HepG2 (cell line): ENCODE measurements at regions of chr2 and their contacts with region 1.

Region 1: GRCh38 chr2:96760036-96760985 is at the start of gene CNNM4:
- DNase-seq: peak; percentile 88
- ATAC-seq: peak; percentile 75
- H3K4me3 ChIP-seq: peak within 1 kb of the TSS; percentile 59 to 94 (median 77)
- H3K27ac ChIP-seq: peak within 1 kb of the TSS; percentile 39
- H3K4me1 ChIP-seq: peaks cover 65% of the 10 kb centered on the region
- H3K27me3 ChIP-seq: peaks cover 3 to 14% of the 10 kb centered on the region in 2 experiments; a peak in 3 of 5 replicates
- CTCF ChIP-seq: peak; percentile 57
- EP300 ChIP-seq: 0 out of 4 replicates have a peak, but pooled peaks of 1 of the 2 experiments have one; percentile 8
- POLR2A ChIP-seq: peak in 1 of 2 experiments; percentile 57; a peak in 2 of 4 replicates
- RAD21 ChIP-seq: no peak
- total RNA-seq, gene CNNM4: 3.0 and 5.9 TPM in 2 replicates

Region 2: DNA sequence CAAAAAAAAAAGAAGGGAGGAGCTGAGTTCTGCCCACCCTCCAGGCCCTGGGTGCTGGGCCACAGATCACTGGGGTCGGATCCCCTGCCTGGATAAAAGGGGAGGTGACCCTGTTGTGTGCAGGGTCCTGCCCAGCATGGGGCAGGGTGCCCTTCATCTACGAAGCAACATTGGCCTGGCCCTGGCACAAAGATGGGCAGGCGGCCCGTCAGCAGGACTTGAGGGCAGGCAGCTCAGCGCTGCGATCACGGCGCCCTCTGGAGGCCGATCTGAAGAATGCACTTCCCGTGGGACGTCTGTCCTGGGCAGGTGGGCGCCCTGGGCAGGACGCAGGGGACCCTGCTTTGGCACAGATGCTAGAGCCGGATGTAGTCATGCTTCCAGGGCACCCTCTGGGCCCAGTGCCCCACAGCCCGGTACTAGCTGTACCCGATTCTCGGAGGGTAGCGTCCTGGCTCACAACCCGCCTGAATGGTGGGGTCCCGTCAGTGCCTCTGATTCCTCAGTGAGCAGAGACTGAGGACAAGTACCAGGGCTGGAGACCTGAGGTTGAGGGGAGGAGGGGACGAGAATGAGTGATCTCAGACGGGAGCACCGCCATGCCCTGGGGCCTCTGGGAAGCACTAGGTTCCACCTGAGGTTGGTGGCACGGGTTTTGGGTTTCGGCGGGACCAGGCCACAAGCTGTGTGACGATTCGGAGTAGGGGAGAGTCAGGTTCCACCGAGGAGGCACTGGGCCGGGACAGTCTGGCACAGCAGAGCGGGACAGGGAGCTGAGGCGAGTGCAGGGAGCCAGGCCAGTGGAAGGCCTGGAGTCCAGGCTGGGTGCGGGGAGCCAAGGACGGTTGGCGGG is 205.8 kb before region 1 on chr2:
- CTCF ChIA-PET with region 1: interaction called, 3 read pairs
- POLR2A ChIA-PET with region 1: interaction called, 11 read pairs
- in situ Hi-C with region 1: no loop called
- intact Hi-C with region 1: loop called (anchors 1 kb)
- DNase-seq: peak; percentile 44
- ATAC-seq: peak; percentile 31
- H3K4me3 ChIP-seq: peak overlapping the region; percentile 25 to 67 (median 29); a peak in 3 of 6 replicates
- H3K27ac ChIP-seq: no peak overlapping the region
- H3K4me1 ChIP-seq: peaks cover 69% of the 10 kb centered on the region
- H3K27me3 ChIP-seq: no peaks in the 10 kb centered on the region
- CTCF ChIP-seq: peak; percentile 97
- EP300 ChIP-seq: no peak
- POLR2A ChIP-seq: no peak
- RAD21 ChIP-seq: peak; percentile 87

Region 3: GRCh38 chr2:96685577-96686459 is 74.5 kb before region 1 on chr2:
- CTCF ChIA-PET with region 1: no interaction called
- POLR2A ChIA-PET with region 1: interaction called, 4 read pairs
- in situ Hi-C with region 1: no loop called
- intact Hi-C with region 1: loop called (anchors 5 kb)
- DNase-seq: peak; percentile 74
- ATAC-seq: peak; percentile 84
- H3K4me3 ChIP-seq: peak overlapping the region; percentile 20 to 66 (median 35); a peak in 5 of 6 replicates
- H3K27ac ChIP-seq: no peak overlapping the region
- H3K4me1 ChIP-seq: peaks cover 68% of the 10 kb centered on the region
- H3K27me3 ChIP-seq: peaks cover 8 to 30% of the 10 kb centered on the region in 2 experiments; a peak in 3 of 5 replicates
- CTCF ChIP-seq: peak; percentile 80
- EP300 ChIP-seq: no peak
- POLR2A ChIP-seq: peak in 1 of 2 experiments; percentile 47; a peak in 1 of 4 replicates
- RAD21 ChIP-seq: peak; percentile 84

Region 4: DNA sequence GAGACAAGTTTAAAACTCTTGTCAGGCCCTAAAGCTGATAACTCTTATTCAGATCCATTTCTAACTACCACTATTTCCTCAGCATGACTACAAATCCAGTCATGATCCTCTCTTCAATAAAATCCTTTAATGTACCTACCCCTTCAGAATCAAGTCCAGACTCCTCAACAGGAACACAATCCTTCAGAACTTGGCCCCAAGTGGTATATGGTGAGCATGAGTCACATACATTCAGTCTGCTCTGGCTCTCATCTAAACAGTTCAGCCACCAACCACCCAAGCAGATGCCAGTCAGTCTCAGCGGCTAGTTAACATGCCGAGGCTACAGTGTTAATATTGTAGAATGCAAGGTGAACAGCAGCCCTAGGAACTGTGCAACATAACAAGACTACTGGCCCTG is 30.1 kb before region 1 on chr2:
- CTCF ChIA-PET with region 1: no interaction called
- POLR2A ChIA-PET with region 1: no interaction called
- in situ Hi-C with region 1: no loop called
- intact Hi-C with region 1: no loop called
- DNase-seq: no peak
- ATAC-seq: no peak
- H3K4me3 ChIP-seq: no peak overlapping the region
- H3K27ac ChIP-seq: no peak overlapping the region
- H3K4me1 ChIP-seq: no peaks in the 10 kb centered on the region
- H3K27me3 ChIP-seq: no peaks in the 10 kb centered on the region
- CTCF ChIP-seq: no peak
- EP300 ChIP-seq: no peak
- POLR2A ChIP-seq: no peak
- RAD21 ChIP-seq: no peak

Region 5: DNA sequence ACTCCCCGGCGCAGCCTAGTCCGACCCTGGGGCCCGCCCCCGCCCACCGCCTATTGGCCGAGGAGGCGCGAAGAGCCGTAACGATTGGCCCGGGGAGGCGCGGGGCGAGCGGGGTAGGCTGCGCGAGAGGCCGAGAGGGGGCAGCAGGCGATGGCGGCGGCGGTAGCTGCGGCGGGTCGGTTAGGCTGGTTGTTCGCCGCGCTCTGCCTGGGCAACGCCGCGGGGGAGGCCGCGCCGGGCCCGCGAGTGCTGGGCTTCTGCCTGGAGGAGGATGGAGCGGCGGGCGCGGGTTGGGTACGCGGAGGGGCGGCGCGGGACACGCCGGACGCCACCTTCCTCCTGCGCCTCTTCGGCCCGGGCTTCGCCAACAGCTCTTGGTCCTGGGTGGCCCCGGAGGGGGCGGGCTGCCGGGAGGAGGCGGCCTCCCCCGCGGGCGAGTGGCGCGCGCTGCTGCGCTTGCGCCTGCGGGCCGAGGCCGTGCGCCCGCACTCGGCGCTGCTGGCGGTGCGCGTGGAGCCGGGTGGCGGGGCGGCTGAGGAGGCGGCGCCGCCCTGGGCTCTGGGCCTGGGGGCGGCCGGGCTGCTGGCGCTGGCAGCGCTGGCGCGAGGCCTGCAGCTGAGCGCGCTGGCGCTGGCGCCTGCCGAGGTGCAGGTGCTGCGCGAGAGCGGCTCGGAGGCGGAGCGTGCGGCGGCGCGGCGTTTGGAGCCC is 56.0 kb after region 1 on chr2 and contains the start of gene CNNM3:
- CTCF ChIA-PET with region 1: no interaction called
- POLR2A ChIA-PET with region 1: interaction called, 14 read pairs
- in situ Hi-C with region 1: no loop called
- intact Hi-C with region 1: loop called (anchors 5 kb)
- DNase-seq: peak; percentile 91
- ATAC-seq: peak; percentile 87
- H3K4me3 ChIP-seq: peak within 1 kb of the TSS; percentile 87 to 96 (median 91)
- H3K27ac ChIP-seq: peak within 1 kb of the TSS; percentile 92
- H3K4me1 ChIP-seq: peaks cover 72% of the 10 kb centered on the region
- H3K27me3 ChIP-seq: no peaks in the 10 kb centered on the region; a peak in 1 of 5 replicates
- CTCF ChIP-seq: peak; percentile 72
- EP300 ChIP-seq: no peak
- POLR2A ChIP-seq: peak in 1 of 2 experiments; percentile 65; a peak in 2 of 4 replicates
- RAD21 ChIP-seq: peak; percentile 27
- total RNA-seq, gene CNNM3: 8.4 and 21.2 TPM in 2 replicates